Head of caudate nucleus (tissue), 42 donors: ENCODE measurements at regions of chr14 and their contacts with region 1.

Region 1: DNA sequence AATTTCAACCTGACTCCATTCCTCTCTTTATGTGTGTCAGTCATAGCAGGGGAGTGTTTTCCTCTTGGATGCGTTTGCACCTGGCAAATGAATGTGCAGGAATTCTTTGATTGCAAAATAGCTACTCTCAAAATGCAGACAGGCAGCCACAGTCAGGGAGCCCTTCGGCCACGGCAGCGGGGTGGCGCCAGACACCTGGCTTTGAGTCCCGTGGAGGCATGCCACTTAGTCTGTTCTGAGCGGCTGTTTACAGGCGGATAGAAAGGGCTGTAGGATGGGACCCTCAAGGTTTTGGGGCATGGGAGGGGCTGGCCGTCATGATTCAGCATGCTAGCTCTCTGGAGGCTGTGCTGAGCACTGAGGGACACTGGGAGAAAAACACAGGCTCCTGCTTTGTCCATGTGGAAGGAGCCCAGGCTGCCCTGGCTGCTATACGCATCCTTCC is 117.1 kb downstream of the SLC25A47 start:
- DNase-seq: peak; percentile 66 to 92 (median 82)

Region 2: DNA sequence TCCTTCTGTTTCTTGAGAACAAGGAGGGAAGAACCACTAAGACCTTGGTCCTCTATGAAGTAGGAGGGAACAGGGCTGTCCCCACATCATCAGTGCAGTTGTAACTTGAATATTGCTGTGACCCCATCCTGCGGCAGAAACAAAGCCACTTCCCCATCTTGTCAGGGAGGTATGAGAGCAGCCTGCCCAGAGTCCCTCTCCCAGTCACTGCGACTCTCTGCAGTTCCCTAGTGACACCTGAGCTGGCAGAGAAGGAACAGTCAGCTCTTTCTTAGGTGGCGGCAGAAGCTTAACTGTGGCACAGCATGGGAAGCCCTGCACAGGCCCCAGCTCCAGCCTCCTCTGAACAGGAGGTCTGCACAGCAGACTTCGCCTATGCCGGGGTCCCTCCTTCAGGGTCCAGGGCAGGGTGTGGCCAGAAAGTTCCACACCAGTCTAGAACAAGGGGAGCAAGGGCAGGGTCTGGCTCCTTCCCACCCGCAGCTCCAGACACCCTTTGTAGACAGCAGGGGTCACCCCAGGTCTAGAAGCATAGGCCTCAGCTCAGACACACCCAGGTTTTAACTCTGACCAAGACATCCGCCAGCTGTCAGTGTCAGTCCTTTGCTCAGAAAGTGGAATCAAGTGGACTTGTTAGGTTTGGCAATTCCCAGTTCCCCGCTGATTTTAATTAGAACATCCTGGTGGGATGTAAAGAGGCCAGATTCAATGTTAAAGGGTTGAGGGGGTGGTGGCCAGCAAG is 317.6 kb before region 1 on chr14:
- intact Hi-C with region 1: no loop called
- DNase-seq: no peak

Region 3: GRCh38 chr14:100486025-100486828 is 46.0 kb after region 1 on chr14:
- intact Hi-C with region 1: no loop called
- DNase-seq: peak in 14 of 42 donors; percentile 9 to 58 (median 26)

Region 4: GRCh38 chr14:100586403-100587085 is 146.3 kb after region 1 on chr14:
- intact Hi-C with region 1: no loop called
- DNase-seq: peak in 40 of 42 donors; percentile 23 to 83 (median 64)

Region 5: DNA sequence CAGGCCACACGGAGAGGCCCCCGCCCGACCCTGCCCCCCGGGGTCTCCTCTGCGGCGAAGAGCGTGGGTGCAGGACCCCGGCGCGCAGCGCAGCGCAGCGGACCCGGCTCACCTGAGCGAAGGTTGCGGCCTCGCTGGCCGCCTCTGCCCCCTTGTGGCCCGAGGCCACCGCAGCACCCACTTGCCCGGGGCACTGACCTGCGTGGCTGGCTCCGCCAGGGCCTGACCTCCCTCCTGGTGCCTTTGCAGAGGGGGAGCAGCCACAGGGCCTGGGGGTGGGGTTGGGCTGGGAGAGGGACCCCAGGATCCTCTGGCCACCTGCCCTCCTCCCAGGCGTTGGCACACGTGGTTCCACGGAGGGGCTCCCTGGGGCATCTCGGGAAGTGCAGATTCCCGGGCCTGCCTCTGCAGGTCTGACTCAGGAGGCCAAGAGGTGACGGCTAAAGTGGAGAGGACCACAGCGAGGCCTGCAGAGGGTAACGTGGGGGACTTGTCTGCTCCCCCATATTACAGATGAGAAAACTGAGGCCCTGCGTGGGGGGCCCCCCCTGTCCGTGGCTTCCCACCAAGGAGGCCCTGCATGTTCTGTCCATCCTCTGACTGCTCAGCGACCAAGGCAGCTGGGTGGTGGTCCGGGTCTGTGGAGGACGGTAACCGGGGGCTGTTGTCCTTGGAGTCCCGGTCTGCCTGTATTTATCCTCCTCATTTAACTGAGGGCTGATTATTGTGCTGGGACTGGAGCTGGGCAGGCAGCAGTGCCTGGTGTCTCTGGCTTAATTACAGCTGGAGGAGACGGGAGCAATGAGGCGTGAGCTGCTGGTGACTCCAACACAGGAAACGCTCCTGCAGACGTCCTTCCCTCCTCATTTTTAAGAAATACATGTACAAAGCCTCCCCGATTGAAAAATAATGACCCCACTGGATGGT is 214.9 kb after region 1 on chr14:
- intact Hi-C with region 1: loop called (anchors 5 kb)
- DNase-seq: peak in 7 of 42 donors; percentile 10 to 50 (median 32)